HEK293T (cell line): ENCODE measurements at regions of chr2 and their contacts with region 1.

Region 1: DNA sequence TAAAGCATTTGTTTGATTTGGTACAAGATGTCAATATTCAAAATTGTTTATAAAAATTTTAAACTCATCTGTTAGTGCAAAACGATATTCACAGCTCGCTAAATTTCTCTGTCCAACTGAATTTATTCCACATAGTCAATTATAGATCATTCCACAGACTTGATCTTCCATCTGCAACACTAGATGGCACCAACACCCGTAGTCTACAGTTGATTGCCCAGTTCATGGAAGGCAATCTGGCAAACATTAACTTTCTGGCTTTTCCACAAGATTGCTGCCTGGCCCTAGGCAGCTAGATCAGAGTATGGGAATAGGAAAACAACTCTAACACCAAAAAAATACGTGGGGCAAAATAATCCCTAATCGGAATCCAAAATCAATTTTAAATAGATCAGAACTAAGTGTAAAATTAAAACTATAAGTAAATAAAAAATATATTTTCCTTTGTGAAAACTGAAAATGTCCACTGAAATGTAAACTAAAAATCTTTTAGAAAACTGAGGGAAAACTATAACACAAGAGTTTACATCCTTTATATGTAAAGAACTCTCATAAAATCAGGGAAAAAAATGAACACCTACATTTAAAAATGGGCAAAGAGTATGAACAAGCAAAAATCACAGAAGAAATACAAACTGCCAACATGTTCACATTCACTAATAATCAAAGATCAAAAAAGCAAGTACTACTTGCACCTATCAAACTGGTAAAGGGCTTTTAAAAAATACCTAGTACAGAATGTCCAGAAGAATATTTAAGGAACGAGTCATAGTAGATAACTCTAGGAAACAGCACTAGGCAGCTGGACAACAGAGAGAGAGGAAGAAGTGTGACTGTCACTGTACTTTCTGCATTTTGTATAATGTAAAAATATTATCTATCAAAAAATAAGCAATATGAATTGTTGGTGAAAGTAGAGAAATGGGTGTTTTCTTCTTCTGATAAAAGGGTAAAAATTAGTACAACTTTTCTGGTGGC is 35.0 kb downstream of the RTN4 start:
- DNase-seq: peak; percentile 63

Region 2: DNA sequence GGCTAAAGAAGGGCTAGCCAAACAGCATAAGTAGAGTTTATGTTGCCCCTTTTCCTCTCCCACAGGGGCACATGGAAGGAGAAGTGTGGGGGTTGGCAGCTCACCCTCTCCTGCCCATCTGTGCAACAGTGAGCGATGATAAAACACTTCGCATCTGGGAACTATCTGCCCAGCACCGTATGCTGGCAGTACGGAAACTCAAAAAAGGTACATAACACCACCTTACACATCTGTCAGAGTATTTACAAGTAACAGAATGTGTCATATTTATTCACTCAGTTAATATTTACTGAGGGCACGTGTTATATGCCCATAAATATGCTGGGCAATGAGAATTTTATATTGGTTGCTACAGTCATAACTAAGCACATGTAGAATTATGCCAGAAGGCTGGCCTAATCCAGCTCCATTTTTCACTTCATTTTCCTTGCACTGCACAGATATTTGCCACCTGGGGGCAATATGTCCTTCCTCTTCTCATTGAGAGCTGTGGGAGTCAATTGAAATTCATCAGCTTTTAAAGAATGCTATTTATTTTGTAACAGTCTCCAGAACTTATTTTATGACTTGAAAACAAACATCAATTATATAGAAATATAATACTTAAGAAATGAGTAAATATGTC is 115.6 kb before region 1 on chr2:
- CTCF ChIA-PET with region 1: interaction called, 12 read pairs
- POLR2A ChIA-PET with region 1: no interaction called
- DNase-seq: no peak

Region 3: GRCh38 chr2:55120634-55121359 is 105.5 kb after region 1 on chr2:
- CTCF ChIA-PET with region 1: interaction called, 11 read pairs
- POLR2A ChIA-PET with region 1: no interaction called
- DNase-seq: peak; percentile 46